B cell (primary cell): ENCODE measurements at regions of chr6 and their contacts with region 1.

Region 1: DNA sequence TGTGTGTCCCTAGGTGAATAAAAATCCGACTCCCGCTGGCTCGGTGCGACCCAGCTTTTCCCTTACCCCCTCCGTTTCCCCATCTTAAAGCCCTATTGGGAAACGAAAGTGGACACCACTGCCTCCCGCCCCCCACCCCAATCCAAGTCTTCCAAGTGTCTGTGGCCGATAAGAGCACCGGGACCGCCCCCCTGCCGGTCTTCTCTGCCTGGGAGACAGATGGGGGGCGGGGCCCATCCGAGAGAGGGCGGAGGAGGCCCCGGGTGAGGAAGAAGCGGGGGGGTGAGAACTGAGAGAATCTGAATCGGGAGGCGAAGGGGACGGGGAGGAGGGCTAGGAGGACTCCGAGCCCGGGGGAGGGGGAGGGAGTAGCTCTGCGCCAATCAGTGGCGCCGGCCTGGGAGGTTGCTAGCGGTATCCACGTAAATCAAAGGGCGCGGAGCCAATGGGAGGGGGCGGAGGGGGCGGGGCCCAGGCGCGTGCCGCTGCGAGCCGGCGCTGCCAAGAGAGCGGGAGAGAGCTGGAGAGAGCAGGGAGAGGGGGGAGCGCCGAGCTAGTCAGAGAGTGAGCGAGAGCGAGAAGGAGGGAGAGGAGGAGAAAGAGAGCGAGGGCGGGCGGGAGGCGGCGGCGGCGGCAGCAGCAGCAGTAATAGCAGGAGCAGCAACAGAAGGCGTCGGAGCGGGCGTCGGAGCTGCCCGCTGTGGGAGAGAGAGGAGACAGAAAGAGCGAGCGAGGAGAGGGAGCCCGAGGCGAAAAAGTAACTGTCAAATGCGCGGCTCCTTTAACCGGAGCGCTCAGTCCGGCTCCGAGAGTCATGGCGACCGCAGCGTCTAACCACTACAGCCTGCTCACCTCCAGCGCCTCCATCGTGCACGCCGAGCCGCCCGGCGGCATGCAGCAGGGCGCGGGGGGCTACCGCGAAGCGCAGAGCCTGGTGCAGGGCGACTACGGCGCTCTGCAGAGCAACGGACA is at the start of gene POU3F2:
- DNase-seq: peak; percentile 79
- ATAC-seq: peak; percentile 86
- H3K4me3 ChIP-seq: peak within 1 kb of the TSS; percentile 48 to 82 (median 59)
- H3K4me3 Mint-ChIP-seq: peak within 1 kb of the TSS; percentile 92
- H3K27ac ChIP-seq: no peak within 1 kb of the TSS
- H3K27ac Mint-ChIP-seq: peak within 1 kb of the TSS; percentile 63
- H3K4me1 ChIP-seq: peaks cover 49 to 60% of the 10 kb centered on the region in 2 donors
- H3K4me1 Mint-ChIP-seq: peaks cover 45% of the 10 kb centered on the region
- H3K27me3 ChIP-seq: peaks cover 0 to 81% (median 69%) of the 10 kb centered on the region in 4 experiments
- H3K27me3 Mint-ChIP-seq: peaks cover 77% of the 10 kb centered on the region
- CTCF ChIP-seq: no peak
- total RNA-seq, gene POU3F2: not detected in 2 replicates

Region 2: GRCh38 chr6:98845211-98846020 is 11.1 kb after region 1 on chr6:
- CTCF ChIA-PET with region 1: interaction called, 6 read pairs
- POLR2A ChIA-PET with region 1: no interaction called
- intact Hi-C with region 1: loop called (anchors 2 kb)
- DNase-seq: peak; percentile 78
- ATAC-seq: peak; percentile 72
- H3K4me3 ChIP-seq: peak overlapping the region in 3 of 5 experiments; percentile 9 to 27 (median 24)
- H3K4me3 Mint-ChIP-seq: peak overlapping the region; percentile 78
- H3K27ac ChIP-seq: no peak overlapping the region
- H3K27ac Mint-ChIP-seq: no peak overlapping the region
- H3K4me1 ChIP-seq: peaks cover 39 to 57% of the 10 kb centered on the region in 2 donors
- H3K4me1 Mint-ChIP-seq: peaks cover 33% of the 10 kb centered on the region
- H3K27me3 ChIP-seq: peaks cover 0 to 87% (median 76%) of the 10 kb centered on the region in 4 experiments
- H3K27me3 Mint-ChIP-seq: peaks cover 73% of the 10 kb centered on the region
- CTCF ChIP-seq: peak; percentile 89

Region 3: GRCh38 chr6:99110029-99110428 is 275.7 kb after region 1 on chr6:
- CTCF ChIA-PET with region 1: no interaction called
- POLR2A ChIA-PET with region 1: no interaction called
- intact Hi-C with region 1: no loop called
- DNase-seq: no peak
- ATAC-seq: no peak
- H3K4me3 ChIP-seq: no peak overlapping the region
- H3K4me3 Mint-ChIP-seq: no peak overlapping the region
- H3K27ac ChIP-seq: no peak overlapping the region
- H3K27ac Mint-ChIP-seq: no peak overlapping the region
- H3K4me1 ChIP-seq: no peaks in the 10 kb centered on the region
- H3K4me1 Mint-ChIP-seq: no peaks in the 10 kb centered on the region
- H3K27me3 ChIP-seq: peaks cover 0 to 3% (median 0%) of the 10 kb centered on the region in 4 experiments
- H3K27me3 Mint-ChIP-seq: peaks cover 19% of the 10 kb centered on the region
- CTCF ChIP-seq: no peak

Region 4: DNA sequence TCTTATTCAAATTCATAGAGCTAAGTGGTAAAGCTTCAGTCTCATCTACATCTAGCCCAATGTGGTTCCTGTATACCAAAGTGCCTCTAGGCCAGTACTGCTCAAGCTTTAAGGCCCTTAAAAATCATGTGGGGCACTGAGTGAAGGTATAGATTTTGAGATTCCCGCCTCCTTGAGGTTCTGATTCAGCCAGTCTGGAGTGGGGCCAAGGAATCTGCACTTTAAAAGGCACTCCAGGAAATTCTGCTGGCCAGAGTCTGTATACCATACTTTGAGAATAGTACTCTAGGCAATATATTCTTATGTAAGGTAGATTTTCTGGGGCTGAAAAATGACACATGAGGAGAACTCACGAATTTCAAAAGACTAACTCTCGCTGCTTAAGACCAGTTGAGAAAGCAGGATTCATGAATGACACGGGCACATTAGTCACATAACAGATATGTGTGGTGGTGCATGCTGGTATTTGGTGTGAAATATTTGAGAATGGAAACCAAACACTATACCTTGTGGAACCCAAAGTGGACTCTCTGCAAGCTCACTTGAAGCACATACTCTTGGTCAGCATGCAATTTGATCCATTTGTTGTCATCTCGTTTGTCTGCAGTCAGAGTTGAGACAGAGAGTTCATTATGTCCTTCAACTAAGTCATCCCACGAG is 1678.0 kb after region 1 on chr6:
- CTCF ChIA-PET with region 1: no interaction called
- POLR2A ChIA-PET with region 1: no interaction called
- intact Hi-C with region 1: no loop called
- DNase-seq: no peak
- ATAC-seq: no peak
- H3K4me3 ChIP-seq: no peak overlapping the region
- H3K4me3 Mint-ChIP-seq: no peak overlapping the region
- H3K27ac ChIP-seq: no peak overlapping the region
- H3K27ac Mint-ChIP-seq: no peak overlapping the region
- H3K4me1 ChIP-seq: no peaks in the 10 kb centered on the region
- H3K4me1 Mint-ChIP-seq: no peaks in the 10 kb centered on the region
- H3K27me3 ChIP-seq: no peaks in the 10 kb centered on the region
- H3K27me3 Mint-ChIP-seq: no peaks in the 10 kb centered on the region
- CTCF ChIP-seq: no peak